CD4-positive, alpha-beta memory T cell (primary cell): ENCODE measurements at regions of chr4 and their contacts with region 1.

Region 1: DNA sequence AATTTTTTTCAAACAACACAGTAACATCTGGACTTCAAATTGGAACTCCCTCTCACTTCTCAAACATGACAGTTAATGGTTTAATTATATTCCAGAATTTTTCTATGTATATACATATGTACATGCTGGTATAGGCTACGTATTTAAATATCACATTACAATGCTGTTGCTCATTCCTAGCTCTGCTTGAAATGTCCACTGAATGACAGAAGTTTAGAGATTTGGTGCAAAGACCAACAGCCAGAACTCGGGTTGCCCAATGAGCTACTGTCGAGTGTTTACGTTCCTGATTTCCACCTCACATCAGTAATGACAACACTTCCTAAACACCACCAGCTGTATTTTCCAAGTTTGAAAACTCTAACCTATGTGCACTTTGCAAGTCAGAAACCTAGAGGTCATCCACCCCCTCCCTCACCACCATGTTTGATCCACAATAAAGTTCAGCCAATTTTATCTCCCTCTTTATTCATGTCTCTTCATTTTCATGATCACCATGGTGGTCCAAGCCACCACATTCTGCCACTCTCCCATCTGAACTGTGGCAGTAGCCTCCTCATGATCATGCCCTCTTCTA is 49.3 kb upstream of the RPL34 start:
- DNase-seq: no peak
- H3K4me3 ChIP-seq: no peak overlapping the region
- H3K4me3 Mint-ChIP-seq: peak overlapping the region in 1 of 8 donors; percentile 4
- H3K27ac ChIP-seq: no peak overlapping the region
- H3K27ac Mint-ChIP-seq: peak overlapping the region in 1 of 7 donors; percentile 27
- H3K4me1 ChIP-seq: peaks cover 7% of the 10 kb centered on the region
- H3K4me1 Mint-ChIP-seq: peaks cover 2 to 9% (median 5%) of the 10 kb centered on the region in 4 donors
- H3K27me3 ChIP-seq: no peaks in the 10 kb centered on the region
- H3K27me3 Mint-ChIP-seq: peaks cover 0 to 2% of the 10 kb centered on the region in 2 donors

Region 2: DNA sequence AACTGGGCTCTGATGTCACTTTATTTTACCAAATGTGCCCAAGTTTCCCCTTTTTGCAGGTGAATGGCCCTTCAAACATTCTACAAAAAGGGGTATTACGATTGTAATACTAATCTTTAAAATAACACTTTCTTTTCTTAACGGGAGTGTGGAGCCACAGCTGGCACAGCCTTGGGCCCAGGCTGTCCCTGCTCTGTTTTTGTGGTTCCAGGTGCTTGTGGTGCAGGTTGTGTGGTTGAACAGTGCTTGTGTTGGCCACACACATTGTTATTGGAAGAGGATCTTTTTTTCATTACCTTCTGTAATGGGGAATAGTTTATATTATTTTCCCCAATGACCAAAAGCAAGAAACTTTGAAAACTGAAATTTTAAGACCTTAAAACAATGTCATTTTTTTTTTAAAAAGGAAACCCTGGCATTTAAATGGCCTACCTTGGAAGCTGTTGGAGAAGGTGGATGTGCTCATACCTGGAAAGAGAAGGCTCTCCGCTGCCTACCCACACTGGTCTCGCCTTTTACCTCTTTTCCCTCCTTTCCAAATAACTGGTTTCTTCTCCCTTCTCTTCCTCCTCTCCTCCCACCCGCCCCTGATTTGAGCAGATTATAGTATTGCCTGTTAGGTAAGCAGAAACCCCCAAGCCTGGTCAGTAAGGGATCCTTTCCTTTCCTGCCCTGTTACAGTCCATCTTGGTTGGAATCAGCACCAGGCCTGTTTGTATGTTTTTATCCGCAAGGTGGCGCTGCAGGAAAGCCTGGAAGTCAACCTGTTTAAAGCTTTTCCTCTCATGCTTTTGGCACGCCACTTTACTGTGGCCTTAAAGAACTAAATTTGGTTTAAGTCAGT is 552.8 kb before region 1 on chr4:
- CTCF ChIA-PET with region 1: interaction called, 229 read pairs
- POLR2A ChIA-PET with region 1: no interaction called
- intact Hi-C with region 1: loop called (anchors 1 kb)
- DNase-seq: peak; percentile 72 to 77 (median 74)
- H3K4me3 ChIP-seq: no peak overlapping the region
- H3K4me3 Mint-ChIP-seq: no peak overlapping the region
- H3K27ac ChIP-seq: no peak overlapping the region
- H3K27ac Mint-ChIP-seq: peak overlapping the region in 2 of 7 donors; percentile 15 to 65
- H3K4me1 ChIP-seq: no peaks in the 10 kb centered on the region
- H3K4me1 Mint-ChIP-seq: peaks cover 1 to 12% (median 3%) of the 10 kb centered on the region in 4 donors
- H3K27me3 ChIP-seq: no peaks in the 10 kb centered on the region
- H3K27me3 Mint-ChIP-seq: no peaks in the 10 kb centered on the region

Region 3: GRCh38 chr4:108036213-108036612 is 534.9 kb before region 1 on chr4:
- CTCF ChIA-PET with region 1: interaction called, 29 read pairs
- POLR2A ChIA-PET with region 1: interaction called, 5 read pairs
- intact Hi-C with region 1: no loop called
- DNase-seq: peak; percentile 45 to 74 (median 60)
- H3K4me3 ChIP-seq: no peak overlapping the region
- H3K4me3 Mint-ChIP-seq: peak overlapping the region in 7 of 8 donors; percentile 21 to 75 (median 60)
- H3K27ac ChIP-seq: peak overlapping the region; percentile 0
- H3K27ac Mint-ChIP-seq: peak overlapping the region; percentile 59 to 93 (median 88)
- H3K4me1 ChIP-seq: peaks cover 13% of the 10 kb centered on the region
- H3K4me1 Mint-ChIP-seq: peaks cover 8 to 23% (median 13%) of the 10 kb centered on the region in 4 donors
- H3K27me3 ChIP-seq: no peaks in the 10 kb centered on the region
- H3K27me3 Mint-ChIP-seq: no peaks in the 10 kb centered on the region

Region 4: GRCh38 chr4:108345862-108346817 is 224.9 kb before region 1 on chr4:
- CTCF ChIA-PET with region 1: no interaction called
- POLR2A ChIA-PET with region 1: no interaction called
- intact Hi-C with region 1: no loop called
- DNase-seq: no peak
- H3K4me3 ChIP-seq: no peak overlapping the region
- H3K4me3 Mint-ChIP-seq: peak overlapping the region in 3 of 8 donors; percentile 15 to 38 (median 18)
- H3K27ac ChIP-seq: no peak overlapping the region
- H3K27ac Mint-ChIP-seq: peak overlapping the region in 3 of 7 donors; percentile 29 to 67 (median 32)
- H3K4me1 ChIP-seq: peaks cover 29% of the 10 kb centered on the region
- H3K4me1 Mint-ChIP-seq: peaks cover 37 to 58% (median 47%) of the 10 kb centered on the region in 4 donors
- H3K27me3 ChIP-seq: no peaks in the 10 kb centered on the region
- H3K27me3 Mint-ChIP-seq: no peaks in the 10 kb centered on the region

Region 5: GRCh38 chr4:108492816-108493595 is 78.1 kb before region 1 on chr4:
- CTCF ChIA-PET with region 1: interaction called, 21 read pairs
- POLR2A ChIA-PET with region 1: no interaction called
- intact Hi-C with region 1: no loop called
- DNase-seq: peak in 3 of 5 donors; percentile 8 to 29 (median 20)
- H3K4me3 ChIP-seq: peak overlapping the region in 1 of 2 donors; percentile 6
- H3K4me3 Mint-ChIP-seq: peak overlapping the region in 1 of 8 donors; percentile 13
- H3K27ac ChIP-seq: no peak overlapping the region
- H3K27ac Mint-ChIP-seq: no peak overlapping the region
- H3K4me1 ChIP-seq: no peaks in the 10 kb centered on the region
- H3K4me1 Mint-ChIP-seq: peaks cover 0 to 4% (median under 1%) of the 10 kb centered on the region in 4 donors
- H3K27me3 ChIP-seq: no peaks in the 10 kb centered on the region
- H3K27me3 Mint-ChIP-seq: no peaks in the 10 kb centered on the region

Region 6: GRCh38 chr4:108560616-108561015 is 10.5 kb before region 1 on chr4:
- CTCF ChIA-PET with region 1: interaction called, 16 read pairs
- POLR2A ChIA-PET with region 1: no interaction called
- intact Hi-C with region 1: no loop called
- DNase-seq: no peak
- H3K4me3 ChIP-seq: no peak overlapping the region
- H3K4me3 Mint-ChIP-seq: no peak overlapping the region
- H3K27ac ChIP-seq: no peak overlapping the region
- H3K27ac Mint-ChIP-seq: no peak overlapping the region
- H3K4me1 ChIP-seq: no peaks in the 10 kb centered on the region
- H3K4me1 Mint-ChIP-seq: peaks cover 0 to 4% (median 0%) of the 10 kb centered on the region in 4 donors
- H3K27me3 ChIP-seq: no peaks in the 10 kb centered on the region
- H3K27me3 Mint-ChIP-seq: peaks cover 0 to 2% of the 10 kb centered on the region in 2 donors